CD8-positive, alpha-beta memory T cell (primary cell): ENCODE measurements at regions of chr10 and their contacts with region 1.

Region 1: GRCh38 chr10:72331601-72332422 is 22.9 kb downstream of the DNAJB12 start:
- DNase-seq: peak; percentile 86 to 98 (median 95)
- H3K4me3 ChIP-seq: peak overlapping the region; percentile 39
- H3K4me3 Mint-ChIP-seq: peak overlapping the region; percentile 55 to 89 (median 79)
- H3K27ac ChIP-seq: peak overlapping the region; percentile 3
- H3K27ac Mint-ChIP-seq: peak overlapping the region; percentile 87 to 98 (median 96)
- H3K4me1 ChIP-seq: peaks cover 97% of the 10 kb centered on the region
- H3K4me1 Mint-ChIP-seq: peaks cover 74 to 94% (median 89%) of the 10 kb centered on the region in 3 donors
- H3K27me3 ChIP-seq: no peaks in the 10 kb centered on the region
- H3K27me3 Mint-ChIP-seq: peaks cover 0 to 1% of the 10 kb centered on the region in 2 donors

Region 2: DNA sequence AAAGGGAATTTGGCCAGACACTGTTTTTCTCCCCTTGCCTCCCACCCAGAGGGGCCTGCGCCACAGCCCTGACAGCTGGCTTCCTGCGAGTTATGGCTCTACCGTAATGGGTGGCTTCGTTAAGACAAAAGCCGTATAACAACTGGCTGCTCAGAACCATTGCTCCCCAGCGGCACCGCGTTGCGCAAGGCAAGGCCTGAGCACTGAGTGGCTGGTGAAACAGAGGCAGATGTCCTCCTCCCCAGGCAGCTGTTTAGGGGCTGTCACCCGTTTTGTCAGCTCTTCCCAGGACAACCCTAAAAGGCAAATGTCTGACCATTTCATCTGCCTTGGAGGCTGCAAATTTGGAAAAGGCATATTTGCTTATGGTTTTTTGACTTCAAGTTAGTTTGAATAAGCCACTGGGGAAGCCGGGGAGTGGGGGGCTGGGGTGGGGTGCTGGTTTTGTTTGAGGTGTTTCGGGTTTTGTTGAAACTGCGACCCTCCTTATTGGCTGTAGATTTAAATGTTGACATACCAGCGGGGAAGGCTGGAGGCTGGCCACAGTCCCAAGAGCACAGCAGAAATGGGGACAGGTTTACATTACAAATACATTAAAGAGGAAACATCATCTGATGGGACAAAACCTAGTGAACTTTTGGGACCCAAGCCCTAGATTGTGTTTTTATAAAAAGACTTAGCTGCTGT is 242.8 kb before region 1 on chr10:
- CTCF ChIA-PET with region 1: interaction called, 25 read pairs
- POLR2A ChIA-PET with region 1: interaction called, 4 read pairs
- DNase-seq: peak in 3 of 5 donors; percentile 39 to 89 (median 69)
- H3K4me3 ChIP-seq: peak overlapping the region; percentile 88
- H3K4me3 Mint-ChIP-seq: peak overlapping the region; percentile 96 to 100 (median 100)
- H3K27ac ChIP-seq: peak overlapping the region; percentile 86
- H3K27ac Mint-ChIP-seq: peak overlapping the region; percentile 96 to 100 (median 100)
- H3K4me1 ChIP-seq: peaks cover 47% of the 10 kb centered on the region
- H3K4me1 Mint-ChIP-seq: peaks cover 48 to 53% (median 51%) of the 10 kb centered on the region in 3 donors
- H3K27me3 ChIP-seq: no peaks in the 10 kb centered on the region
- H3K27me3 Mint-ChIP-seq: peaks cover 0 to 11% of the 10 kb centered on the region in 2 donors

Region 3: DNA sequence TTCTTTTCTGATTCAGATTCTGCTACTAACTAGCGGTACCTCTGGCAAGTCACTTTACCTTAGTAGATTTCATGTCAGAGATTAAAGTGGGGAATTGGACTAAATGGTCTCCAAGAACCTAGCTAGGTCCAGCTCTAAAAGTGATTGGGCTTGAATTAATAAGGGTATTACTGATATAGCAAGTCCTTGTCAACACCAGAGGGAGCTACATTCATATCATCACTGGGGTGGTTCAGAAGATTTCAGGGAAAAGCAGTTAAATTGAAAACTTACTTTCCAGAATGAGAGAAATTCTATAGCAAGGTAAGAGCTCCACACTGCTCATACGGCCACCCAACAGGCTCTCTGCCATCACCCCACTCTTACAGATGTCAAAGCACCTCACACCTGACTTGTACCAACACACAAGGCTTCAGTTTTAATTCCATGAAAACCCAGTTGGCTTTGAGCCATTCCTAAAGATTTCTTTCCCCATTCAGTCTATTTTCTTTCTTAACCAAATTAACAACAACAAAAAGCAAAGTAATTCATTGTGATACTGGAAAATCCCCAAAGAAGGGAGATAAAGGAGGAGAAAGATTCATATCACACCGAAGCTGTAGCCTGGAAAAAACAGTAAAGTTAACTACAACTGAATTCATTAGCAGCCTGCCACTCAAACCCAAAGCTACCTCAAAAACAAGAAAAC is 205.5 kb before region 1 on chr10:
- CTCF ChIA-PET with region 1: interaction called, 57 read pairs
- POLR2A ChIA-PET with region 1: no interaction called
- DNase-seq: no peak
- H3K4me3 ChIP-seq: no peak overlapping the region
- H3K4me3 Mint-ChIP-seq: no peak overlapping the region
- H3K27ac ChIP-seq: no peak overlapping the region
- H3K27ac Mint-ChIP-seq: peak overlapping the region in 1 of 8 donors; percentile 40
- H3K4me1 ChIP-seq: peaks cover 12% of the 10 kb centered on the region
- H3K4me1 Mint-ChIP-seq: peaks cover 14 to 25% (median 18%) of the 10 kb centered on the region in 3 donors
- H3K27me3 ChIP-seq: no peaks in the 10 kb centered on the region
- H3K27me3 Mint-ChIP-seq: no peaks in the 10 kb centered on the region

Region 4: GRCh38 chr10:72297968-72298773 is 33.6 kb before region 1 on chr10:
- CTCF ChIA-PET with region 1: interaction called, 9 read pairs
- POLR2A ChIA-PET with region 1: interaction called, 13 read pairs
- DNase-seq: peak; percentile 72 to 94 (median 87)
- H3K4me3 ChIP-seq: peak overlapping the region; percentile 57
- H3K4me3 Mint-ChIP-seq: peak overlapping the region; percentile 76 to 89 (median 85)
- H3K27ac ChIP-seq: peak overlapping the region; percentile 98
- H3K27ac Mint-ChIP-seq: peak overlapping the region; percentile 97 to 100 (median 99)
- H3K4me1 ChIP-seq: peaks cover 54% of the 10 kb centered on the region
- H3K4me1 Mint-ChIP-seq: peaks cover 36 to 60% (median 41%) of the 10 kb centered on the region in 3 donors
- H3K27me3 ChIP-seq: no peaks in the 10 kb centered on the region
- H3K27me3 Mint-ChIP-seq: peaks cover 0 to 4% of the 10 kb centered on the region in 2 donors

Region 5: DNA sequence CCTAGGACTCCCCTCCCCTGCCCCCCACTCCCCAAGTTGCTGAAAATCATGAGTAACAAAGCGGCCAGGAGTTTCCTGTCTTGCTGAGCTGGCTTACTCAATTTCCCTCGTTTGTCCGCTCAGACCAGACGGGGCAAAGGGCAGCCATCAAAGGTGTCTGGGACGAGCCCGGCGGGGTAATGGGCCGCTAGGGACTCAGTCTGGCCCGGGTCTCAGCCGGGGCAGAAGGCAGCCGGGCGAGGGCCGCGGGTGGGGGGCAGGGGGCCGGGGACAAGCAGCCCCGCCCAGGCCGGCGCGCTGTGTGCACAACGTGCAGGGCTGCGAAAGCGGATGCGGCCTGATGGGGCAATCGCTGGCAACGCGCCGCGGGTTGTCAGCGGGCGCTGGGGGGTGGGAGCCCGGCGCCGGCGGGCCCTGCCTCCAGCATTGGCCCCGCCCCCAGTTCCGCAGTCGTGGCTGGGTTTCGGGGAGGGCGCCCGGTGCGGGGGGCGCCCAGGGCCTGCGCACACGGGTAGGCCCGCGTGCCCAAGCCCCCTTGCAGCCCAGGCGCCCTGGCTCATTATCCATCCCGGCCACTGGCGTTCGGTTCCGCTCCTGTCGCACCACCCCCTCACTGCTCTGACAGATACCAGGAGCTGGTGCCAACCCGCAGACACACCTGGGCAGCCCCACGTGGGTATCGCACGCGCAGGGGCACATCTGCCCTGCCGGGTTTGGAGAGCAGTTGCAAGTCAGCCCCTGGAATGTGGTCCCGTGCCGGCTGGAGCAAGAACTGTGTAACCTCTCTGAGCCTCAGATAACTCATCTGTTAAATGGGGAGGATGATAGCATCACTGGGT is 12.2 kb before region 1 on chr10:
- CTCF ChIA-PET with region 1: interaction called, 29 read pairs
- POLR2A ChIA-PET with region 1: interaction called, 10 read pairs
- DNase-seq: peak; percentile 80 to 92 (median 89)
- H3K4me3 ChIP-seq: peak overlapping the region; percentile 61
- H3K4me3 Mint-ChIP-seq: peak overlapping the region; percentile 78 to 92 (median 82)
- H3K27ac ChIP-seq: peak overlapping the region; percentile 89
- H3K27ac Mint-ChIP-seq: peak overlapping the region; percentile 76 to 100 (median 99)
- H3K4me1 ChIP-seq: peaks cover 89% of the 10 kb centered on the region
- H3K4me1 Mint-ChIP-seq: peaks cover 66 to 88% (median 70%) of the 10 kb centered on the region in 3 donors
- H3K27me3 ChIP-seq: no peaks in the 10 kb centered on the region
- H3K27me3 Mint-ChIP-seq: peaks cover 0 to 1% of the 10 kb centered on the region in 2 donors